Calu3 (cell line): ENCODE measurements at regions of chr20 and their contacts with region 1.

Region 1: DNA sequence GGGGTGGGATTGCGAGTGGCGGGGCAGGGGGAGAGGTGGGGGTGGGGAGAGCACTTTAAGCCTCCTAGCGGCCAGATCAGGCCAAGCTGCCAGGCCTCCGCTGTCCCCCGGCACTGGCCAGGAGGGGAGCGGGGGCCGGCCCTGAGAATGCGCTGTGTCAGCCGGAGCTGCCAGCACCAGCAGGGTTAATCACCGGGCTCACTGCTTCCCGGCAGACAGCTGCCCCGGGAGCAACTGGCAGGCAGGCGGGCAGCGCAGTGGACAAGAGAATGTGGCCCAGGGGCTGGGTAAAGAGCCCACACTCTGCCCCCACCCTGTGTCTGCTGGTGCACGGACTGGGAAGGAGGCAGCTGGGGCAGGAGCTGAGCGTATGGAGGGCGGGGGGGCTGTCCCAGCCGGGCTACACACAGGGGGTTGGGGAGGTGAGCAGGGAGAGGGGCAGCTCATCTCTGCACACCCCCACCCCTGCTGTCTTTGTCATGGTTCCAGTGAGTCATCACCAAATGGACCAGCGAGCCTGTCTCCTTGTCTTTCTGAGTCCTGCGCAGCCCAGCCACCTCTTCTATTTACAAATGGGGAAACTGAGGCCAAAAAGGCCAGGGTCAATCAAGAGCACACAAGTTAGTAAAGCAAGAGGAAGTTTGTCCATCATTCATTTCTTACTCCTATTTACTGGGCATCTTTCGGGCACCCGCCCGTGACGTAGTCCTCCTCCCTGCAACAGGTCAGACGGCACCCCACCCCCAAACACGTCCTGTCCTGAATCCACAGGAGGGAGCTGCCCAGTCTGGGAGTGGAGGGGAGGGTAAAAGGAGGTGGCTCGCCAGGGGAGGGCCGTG is 2.1 kb upstream of the LAMA5 start:
- DNase-seq: peak; percentile 62
- H3K4me3 Mint-ChIP-seq: peak overlapping the region; percentile 79
- H3K27ac Mint-ChIP-seq: no peak overlapping the region
- H3K4me1 Mint-ChIP-seq: peaks cover 37% of the 10 kb centered on the region
- H3K27me3 Mint-ChIP-seq: no peaks in the 10 kb centered on the region
- CTCF ChIP-seq: peak; percentile 81

Region 2: DNA sequence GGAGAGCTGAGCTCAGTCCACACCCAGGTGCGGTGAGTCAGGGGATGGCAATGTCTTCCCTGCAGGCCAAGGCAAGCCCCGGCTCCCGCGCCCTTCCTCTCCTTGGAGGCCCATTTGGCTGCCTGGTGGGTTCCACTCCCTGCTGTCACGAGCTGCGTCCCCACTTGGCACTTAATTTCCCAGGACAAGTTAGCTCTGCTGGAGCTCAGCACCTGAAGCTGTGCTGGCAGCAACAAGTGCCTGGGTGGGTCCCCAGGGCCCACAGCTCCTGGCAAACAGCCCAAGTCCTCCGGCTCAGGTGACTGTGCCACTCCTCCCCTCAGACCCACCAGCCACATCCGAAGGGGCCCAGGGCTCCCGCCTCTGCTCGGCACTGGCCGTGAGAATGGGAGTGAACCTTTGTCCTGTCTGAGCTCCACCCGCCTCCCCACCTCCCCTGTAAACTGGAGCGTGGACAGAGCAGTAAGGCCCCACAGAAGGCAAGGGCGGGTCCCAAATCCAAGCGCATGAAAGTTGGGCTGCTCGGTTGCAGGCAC is 19.0 kb before region 1 on chr20:
- CTCF ChIA-PET with region 1: interaction called, 33 read pairs
- intact Hi-C with region 1: loop called (anchors 2 kb)
- DNase-seq: peak; percentile 98
- H3K4me3 Mint-ChIP-seq: peak overlapping the region; percentile 60
- H3K27ac Mint-ChIP-seq: peak overlapping the region; percentile 93
- H3K4me1 Mint-ChIP-seq: peaks cover 33% of the 10 kb centered on the region
- H3K27me3 Mint-ChIP-seq: no peaks in the 10 kb centered on the region
- CTCF ChIP-seq: no peak